Ascending aorta (tissue), 2 donors: ENCODE measurements at regions of chr13 and their contacts with region 1.

Region 1: GRCh38 chr13:36919833-36920615 is at the start of gene SMAD9:
- DNase-seq: peak in 1 of 2 donors; percentile 86
- H3K4me3 ChIP-seq: peak within 1 kb of the TSS; percentile 81 to 87
- H3K27ac ChIP-seq: peak within 1 kb of the TSS; percentile 88 to 89
- H3K4me1 ChIP-seq: peaks cover 0 to 15% of the 10 kb centered on the region in 2 donors
- H3K27me3 ChIP-seq: no peaks in the 10 kb centered on the region
- CTCF ChIP-seq: no peak
- total RNA-seq, gene SMAD9: 24.5 TPM

Region 2: GRCh38 chr13:36818804-36819738 is 101.0 kb before region 1 on chr13 and contains the start of gene RFXAP:
- intact Hi-C with region 1: loop called (anchors 2 kb)
- DNase-seq: peak; percentile 45 to 92
- H3K4me3 ChIP-seq: peak within 1 kb of the TSS; percentile 74 to 87
- H3K27ac ChIP-seq: peak within 1 kb of the TSS; percentile 63 to 73
- H3K4me1 ChIP-seq: peaks cover 0 to 4% of the 10 kb centered on the region in 2 donors
- H3K27me3 ChIP-seq: no peaks in the 10 kb centered on the region
- CTCF ChIP-seq: peak in 2 of 3 experiments; percentile 17 to 22
- total RNA-seq, gene RFXAP: 5.9 TPM

Region 3: GRCh38 chr13:36858290-36858689 is 61.7 kb before region 1 on chr13:
- intact Hi-C with region 1: loop called (anchors 5 kb)
- DNase-seq: no peak
- H3K4me3 ChIP-seq: no peak overlapping the region
- H3K27ac ChIP-seq: no peak overlapping the region
- H3K4me1 ChIP-seq: peaks cover 0 to 2% of the 10 kb centered on the region in 2 donors
- H3K27me3 ChIP-seq: no peaks in the 10 kb centered on the region
- CTCF ChIP-seq: peak; percentile 12 to 62 (median 38)

Region 4: DNA sequence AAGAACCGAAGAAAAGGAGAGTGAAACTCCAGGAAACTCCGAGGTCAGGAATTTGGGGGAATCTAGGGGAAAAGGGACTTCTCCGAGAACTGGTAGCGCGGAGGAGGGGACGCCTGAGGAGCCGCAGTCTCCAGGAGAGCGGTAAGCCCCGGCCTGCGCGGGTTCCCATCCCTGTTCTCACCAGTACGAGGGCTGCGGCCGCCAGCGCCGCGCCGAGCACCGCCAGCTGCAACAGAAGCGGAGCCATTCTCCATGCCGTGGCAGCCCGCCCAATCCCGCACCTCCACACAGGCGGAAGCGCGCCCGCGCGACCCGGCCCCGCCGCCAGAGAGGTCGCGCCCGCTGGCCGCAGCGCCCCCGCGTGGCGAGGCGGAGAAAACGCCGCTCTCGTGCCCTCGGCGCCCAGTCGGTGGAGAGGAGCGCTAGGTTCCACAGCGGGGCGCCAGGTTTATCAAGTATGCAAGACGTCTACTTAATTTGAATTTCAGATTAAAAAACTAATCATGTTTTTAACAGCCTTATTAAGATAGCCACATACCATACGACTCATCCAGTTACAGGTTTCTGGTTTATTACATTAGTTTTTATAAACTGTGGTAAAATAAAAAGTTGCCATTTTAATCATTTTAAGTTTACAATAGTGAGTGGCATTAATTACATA is 79.2 kb after region 1 on chr13 and contains the start of gene ALG5:
- intact Hi-C with region 1: loop called (anchors 1 kb)
- DNase-seq: peak; percentile 23 to 93
- H3K4me3 ChIP-seq: peak within 1 kb of the TSS; percentile 88 to 98
- H3K27ac ChIP-seq: peak within 1 kb of the TSS; percentile 98 to 100
- H3K4me1 ChIP-seq: peaks cover 3 to 5% of the 10 kb centered on the region in 2 donors
- H3K27me3 ChIP-seq: no peaks in the 10 kb centered on the region
- CTCF ChIP-seq: peak; percentile 74 to 91 (median 87)
- total RNA-seq, gene ALG5: 26.7 TPM